Sigmoid colon (tissue), 7 donors: ENCODE measurements at regions of chr7 and their contacts with region 1.

Region 1: GRCh38 chr7:64951250-64951848 is 39.5 kb downstream of the ZNF117 start:
- DNase-seq: no peak
- H3K4me3 ChIP-seq: no peak overlapping the region
- H3K27ac ChIP-seq: no peak overlapping the region
- H3K4me1 ChIP-seq: peaks cover 0 to 12% (median 11%) of the 10 kb centered on the region in 4 donors
- H3K27me3 ChIP-seq: peaks cover 10 to 24% (median 13%) of the 10 kb centered on the region in 3 donors
- CTCF ChIP-seq: peak; percentile 67 to 82 (median 74)
- EP300 ChIP-seq: no peak
- POLR2A ChIP-seq: no peak

Region 2: GRCh38 chr7:64774204-64774842 is 177.0 kb before region 1 on chr7:
- intact Hi-C with region 1: no loop called
- DNase-seq: no peak
- H3K4me3 ChIP-seq: no peak overlapping the region
- H3K27ac ChIP-seq: no peak overlapping the region
- H3K4me1 ChIP-seq: no peaks in the 10 kb centered on the region
- H3K27me3 ChIP-seq: no peaks in the 10 kb centered on the region
- CTCF ChIP-seq: no peak
- EP300 ChIP-seq: no peak
- POLR2A ChIP-seq: no peak

Region 3: GRCh38 chr7:64934478-64934877 is 16.9 kb before region 1 on chr7:
- intact Hi-C with region 1: no loop called
- DNase-seq: no peak
- H3K4me3 ChIP-seq: no peak overlapping the region
- H3K27ac ChIP-seq: no peak overlapping the region
- H3K4me1 ChIP-seq: no peaks in the 10 kb centered on the region
- H3K27me3 ChIP-seq: no peaks in the 10 kb centered on the region
- CTCF ChIP-seq: no peak
- EP300 ChIP-seq: no peak
- POLR2A ChIP-seq: no peak

Region 4: DNA sequence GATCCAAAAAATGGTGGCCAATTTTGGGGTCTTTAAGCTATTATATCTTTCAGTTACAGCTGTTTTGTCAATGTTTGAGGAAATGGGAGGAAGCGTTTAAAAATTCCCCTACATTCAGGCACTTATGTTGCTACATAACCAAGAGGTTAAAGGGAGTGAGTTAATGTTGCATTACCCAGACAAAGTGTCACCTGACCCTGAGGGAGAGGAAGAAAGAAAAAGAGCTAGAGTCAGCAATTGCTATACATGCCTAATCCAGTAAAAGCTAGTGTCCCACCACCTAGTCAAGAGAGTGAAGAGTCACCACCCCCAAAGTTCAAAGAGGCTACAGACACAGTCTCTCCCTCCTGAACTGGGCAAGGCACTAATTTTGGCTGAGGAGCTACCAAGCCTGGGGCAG is 352.8 kb after region 1 on chr7:
- intact Hi-C with region 1: loop called (anchors 5 kb)
- DNase-seq: no peak
- H3K4me3 ChIP-seq: no peak overlapping the region
- H3K27ac ChIP-seq: no peak overlapping the region
- H3K4me1 ChIP-seq: no peaks in the 10 kb centered on the region
- H3K27me3 ChIP-seq: no peaks in the 10 kb centered on the region
- CTCF ChIP-seq: no peak
- EP300 ChIP-seq: no peak
- POLR2A ChIP-seq: no peak

Region 5: GRCh38 chr7:65387891-65388290 is 436.5 kb after region 1 on chr7:
- intact Hi-C with region 1: loop called (anchors 10 kb)
- DNase-seq: no peak
- H3K4me3 ChIP-seq: no peak overlapping the region
- H3K27ac ChIP-seq: no peak overlapping the region
- H3K4me1 ChIP-seq: peaks cover 0 to 7% (median 0%) of the 10 kb centered on the region in 4 donors
- H3K27me3 ChIP-seq: no peaks in the 10 kb centered on the region
- CTCF ChIP-seq: no peak
- EP300 ChIP-seq: no peak
- POLR2A ChIP-seq: no peak